Mucosa of descending colon (tissue), 3 donors: ENCODE measurements at regions of chr13 and their contacts with region 1.

Region 1: DNA sequence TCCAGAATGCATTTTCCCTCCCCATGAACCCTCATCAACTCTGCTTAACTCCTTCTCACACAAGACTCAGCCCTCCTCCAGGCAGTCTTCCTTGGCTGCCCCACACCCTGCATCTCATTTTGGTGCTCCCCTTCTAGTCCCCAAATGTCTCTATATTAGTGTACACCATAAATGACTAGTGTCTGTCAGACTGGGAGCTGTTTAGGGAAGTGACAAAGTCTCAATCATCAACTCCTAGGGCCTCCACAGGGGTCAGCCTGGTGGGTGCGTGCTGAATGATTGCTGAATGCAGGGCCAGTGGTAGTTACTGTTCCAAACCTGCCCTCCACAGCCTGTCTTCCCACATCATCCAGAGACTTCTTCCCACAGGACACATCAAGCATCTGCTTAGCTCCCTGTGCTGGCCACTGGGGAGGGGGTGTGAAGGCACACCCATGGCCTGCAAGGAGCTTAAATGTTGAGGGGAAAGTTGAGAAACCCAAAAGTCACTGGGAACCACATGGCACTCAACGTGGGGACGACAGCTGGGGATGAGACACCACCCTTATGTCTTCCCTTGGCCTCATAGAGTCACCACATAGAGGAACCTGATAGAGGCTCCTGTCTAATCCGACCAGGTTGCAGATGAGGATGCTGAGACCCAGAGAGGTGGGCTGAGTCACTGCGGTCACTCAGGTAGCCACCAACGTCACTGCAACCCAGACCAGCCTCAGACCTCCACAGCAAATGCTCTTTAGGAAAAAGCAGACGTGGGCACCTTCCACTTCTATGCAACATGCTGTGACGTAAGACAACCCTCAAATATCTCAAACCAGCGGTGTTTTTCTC is 79.3 kb upstream of the TM9SF2 start:
- DNase-seq: no peak
- ATAC-seq: no peak
- H3K4me3 ChIP-seq: no peak overlapping the region
- H3K4me1 ChIP-seq: no peaks in the 10 kb centered on the region
- CTCF ChIP-seq: no peak

Region 2: DNA sequence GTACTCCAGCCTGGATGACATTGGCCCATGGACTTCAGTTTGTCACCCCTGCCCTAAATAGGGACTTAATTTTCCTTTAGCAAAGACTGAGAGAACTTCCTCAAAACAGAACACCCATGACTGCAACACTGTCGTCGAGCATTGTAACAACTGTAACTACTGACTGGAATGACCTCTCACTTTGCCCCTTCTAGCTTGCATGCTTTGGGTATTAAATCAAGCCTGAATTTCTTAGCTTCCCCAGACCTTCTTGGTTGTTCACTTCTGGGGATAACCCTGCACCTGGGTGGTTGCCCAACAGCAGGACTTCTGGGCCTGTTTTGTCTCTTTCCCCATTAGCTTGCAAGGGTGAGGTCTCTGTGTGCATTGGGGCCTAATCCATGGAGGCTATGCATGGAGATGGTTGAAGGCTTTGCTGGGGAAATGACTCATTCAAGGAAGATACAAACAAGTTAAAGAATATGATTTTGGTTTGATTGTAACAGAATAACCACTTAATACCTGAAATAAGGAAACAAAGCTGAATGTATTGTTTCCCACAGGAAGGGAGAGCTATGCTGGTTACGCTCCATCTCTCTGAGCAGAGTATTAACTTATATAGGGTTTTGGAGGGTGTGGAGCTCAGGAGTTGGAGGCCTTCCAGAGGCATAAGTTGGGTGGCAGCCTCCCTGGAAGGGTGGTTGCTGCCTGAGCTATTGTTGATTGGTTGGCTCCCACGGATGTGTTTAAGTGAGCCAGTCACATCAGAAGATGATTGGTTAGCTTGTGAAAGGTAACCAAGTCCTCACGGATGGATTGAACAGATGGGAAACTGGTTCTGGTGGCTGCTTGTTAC is 256.0 kb before region 1 on chr13:
- intact Hi-C with region 1: no loop called
- DNase-seq: no peak
- ATAC-seq: peak; percentile 87
- H3K4me3 ChIP-seq: no peak overlapping the region
- H3K4me1 ChIP-seq: no peaks in the 10 kb centered on the region
- CTCF ChIP-seq: no peak

Region 3: GRCh38 chr13:99386911-99387788 is 34.8 kb before region 1 on chr13:
- intact Hi-C with region 1: loop called in 1 of 2 experiments (anchors 5 kb)
- DNase-seq: peak; percentile 80 to 85 (median 84)
- ATAC-seq: peak; percentile 65
- H3K4me3 ChIP-seq: no peak overlapping the region
- H3K4me1 ChIP-seq: peaks cover 6% of the 10 kb centered on the region
- CTCF ChIP-seq: peak; percentile 52